Thyroid gland (tissue), 4 donors: ENCODE measurements at regions of chr11 and their contacts with region 1.

Region 1: DNA sequence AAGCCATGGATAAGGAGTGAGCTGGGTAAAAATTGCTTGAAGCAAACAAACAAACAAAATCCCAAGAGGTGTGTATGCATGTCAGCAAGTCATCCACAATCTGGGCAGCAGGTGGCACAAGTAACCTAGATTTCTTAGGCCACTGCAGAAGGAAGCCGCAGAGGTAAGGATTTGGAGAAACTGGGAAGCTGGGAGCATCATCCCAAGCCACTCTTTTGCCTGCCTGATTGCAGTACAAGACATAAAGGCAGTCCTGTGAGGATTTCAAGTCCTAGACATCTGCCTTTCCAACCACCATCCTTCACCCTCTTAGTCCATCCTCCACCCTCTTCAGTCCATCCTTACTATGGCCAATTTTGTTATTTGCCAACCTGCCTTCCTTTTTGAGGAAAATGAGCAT is 67.2 kb upstream of the BMAL1 start:
- DNase-seq: peak; percentile 79 to 81
- H3K4me3 ChIP-seq: no peak overlapping the region
- H3K27ac ChIP-seq: no peak overlapping the region
- H3K4me1 ChIP-seq: peaks cover 0 to 25% of the 10 kb centered on the region in 2 donors
- H3K27me3 ChIP-seq: no peaks in the 10 kb centered on the region
- CTCF ChIP-seq: peak; percentile 27 to 91 (median 74)
- POLR2A ChIP-seq: no peak

Region 2: DNA sequence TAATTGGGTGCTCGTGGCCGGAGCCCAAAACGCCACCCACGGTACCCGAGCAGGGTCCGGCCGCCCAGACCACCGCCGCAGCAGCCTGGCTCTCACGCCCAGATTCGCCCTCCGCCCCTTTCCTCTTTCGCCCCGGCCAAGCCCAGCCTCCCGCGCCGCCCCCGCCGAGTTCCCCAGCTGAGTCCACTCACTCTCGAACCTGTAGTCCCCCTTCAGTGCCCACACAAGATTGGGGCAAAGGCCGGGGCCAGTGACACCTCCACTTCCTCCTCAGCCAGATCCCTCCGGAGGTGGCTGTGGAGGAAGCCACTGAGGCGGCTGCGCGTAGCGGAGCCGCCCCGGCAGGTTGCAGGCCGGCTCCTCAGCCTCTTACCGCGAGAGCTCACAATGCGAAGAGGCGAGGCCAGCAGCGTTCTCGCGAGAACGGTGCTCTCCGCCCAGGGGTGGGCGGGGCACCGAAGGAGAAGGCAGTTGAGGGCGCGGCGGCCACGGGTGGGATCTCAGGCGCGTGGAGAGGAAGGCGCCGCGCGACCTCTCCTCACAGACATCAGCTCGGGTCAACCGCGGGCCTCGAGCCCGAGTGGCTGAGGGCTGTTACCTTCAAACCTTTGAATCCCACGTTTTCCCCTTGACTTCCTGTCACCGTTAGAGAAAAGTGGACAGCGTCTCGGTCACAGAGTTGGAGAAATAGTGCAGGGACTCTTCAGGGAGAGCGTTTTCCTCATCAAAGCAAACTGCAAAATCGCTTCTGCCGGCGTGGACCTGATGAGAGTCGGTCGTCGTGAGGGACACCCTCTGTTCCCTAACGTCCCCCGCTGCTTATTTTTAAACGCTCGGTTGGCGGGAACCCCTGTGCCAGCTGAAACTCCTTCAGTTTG is 252.7 kb after region 1 on chr11 and contains the start of gene BTBD10:
- intact Hi-C with region 1: loop called (anchors 10 kb)
- DNase-seq: peak; percentile 93 to 94
- H3K4me3 ChIP-seq: peak within 1 kb of the TSS; percentile 45 to 71 (median 60)
- H3K27ac ChIP-seq: peak within 1 kb of the TSS; percentile 40 to 72 (median 71)
- H3K4me1 ChIP-seq: peaks cover 5 to 9% of the 10 kb centered on the region in 2 donors
- H3K27me3 ChIP-seq: no peaks in the 10 kb centered on the region
- CTCF ChIP-seq: no peak
- POLR2A ChIP-seq: peak; percentile 22 to 89
- total RNA-seq, gene BTBD10: 26.9 to 36.6 (median 35.3) TPM